Caco-2 (cell line): ENCODE measurements at regions of chr2 and their contacts with region 1.

Region 1: GRCh38 chr2:35871672-35872071 is 483.9 kb upstream of the CRIM1 start:
- DNase-seq: peak in 1 of 2 experiments; percentile 25
- H3K4me3 ChIP-seq: no peak overlapping the region
- H3K4me3 Mint-ChIP-seq: no peak overlapping the region
- H3K27ac Mint-ChIP-seq: no peak overlapping the region
- H3K4me1 ChIP-seq: no peaks in the 10 kb centered on the region
- H3K4me1 Mint-ChIP-seq: no peaks in the 10 kb centered on the region
- H3K27me3 ChIP-seq: no peaks in the 10 kb centered on the region
- H3K27me3 Mint-ChIP-seq: no peaks in the 10 kb centered on the region
- CTCF ChIP-seq: peak; percentile 64 to 66

Region 2: GRCh38 chr2:36197181-36197971 is 325.7 kb after region 1 on chr2:
- CTCF ChIA-PET with region 1: no interaction called
- POLR2A ChIA-PET with region 1: no interaction called
- intact Hi-C with region 1: loop called (anchors 10 kb)
- DNase-seq: no peak
- H3K4me3 ChIP-seq: no peak overlapping the region
- H3K4me3 Mint-ChIP-seq: no peak overlapping the region
- H3K27ac Mint-ChIP-seq: no peak overlapping the region
- H3K4me1 ChIP-seq: no peaks in the 10 kb centered on the region
- H3K4me1 Mint-ChIP-seq: no peaks in the 10 kb centered on the region
- H3K27me3 ChIP-seq: no peaks in the 10 kb centered on the region
- H3K27me3 Mint-ChIP-seq: no peaks in the 10 kb centered on the region
- CTCF ChIP-seq: no peak

Region 3: DNA sequence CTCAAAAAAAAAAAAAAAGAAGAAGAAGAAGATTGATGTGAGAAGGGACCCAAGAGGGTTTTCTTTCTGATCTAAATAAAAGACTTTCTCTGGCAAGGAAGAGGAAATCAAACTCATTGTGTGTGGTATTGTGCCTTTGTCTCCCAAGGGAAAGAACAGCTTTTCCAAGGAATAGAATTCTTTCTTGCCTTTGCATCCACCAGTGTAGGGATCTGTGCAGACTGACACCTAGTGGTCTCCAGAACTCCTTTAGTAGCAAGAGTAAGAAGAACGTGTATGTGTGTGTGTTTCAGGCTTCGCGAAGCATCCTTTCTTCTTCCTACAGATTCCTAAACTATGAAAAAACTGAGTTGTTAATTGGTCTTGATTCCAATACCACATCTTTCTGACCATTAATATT is 450.4 kb after region 1 on chr2:
- CTCF ChIA-PET with region 1: interaction called, 6 read pairs
- POLR2A ChIA-PET with region 1: no interaction called
- intact Hi-C with region 1: loop called (anchors 1 kb)
- DNase-seq: peak in 1 of 2 experiments; percentile 35
- H3K4me3 ChIP-seq: no peak overlapping the region
- H3K4me3 Mint-ChIP-seq: no peak overlapping the region
- H3K27ac Mint-ChIP-seq: no peak overlapping the region
- H3K4me1 ChIP-seq: no peaks in the 10 kb centered on the region
- H3K4me1 Mint-ChIP-seq: no peaks in the 10 kb centered on the region
- H3K27me3 ChIP-seq: no peaks in the 10 kb centered on the region
- H3K27me3 Mint-ChIP-seq: no peaks in the 10 kb centered on the region
- CTCF ChIP-seq: peak; percentile 43 to 67

Region 4: GRCh38 chr2:36672199-36672598 is 800.5 kb after region 1 on chr2:
- CTCF ChIA-PET with region 1: no interaction called
- POLR2A ChIA-PET with region 1: no interaction called
- intact Hi-C with region 1: loop called (anchors 1 kb)
- DNase-seq: peak in 1 of 2 experiments; percentile 48
- H3K4me3 ChIP-seq: no peak overlapping the region
- H3K4me3 Mint-ChIP-seq: no peak overlapping the region
- H3K27ac Mint-ChIP-seq: no peak overlapping the region
- H3K4me1 ChIP-seq: peaks cover 4% of the 10 kb centered on the region; the same call in 1 of the 2 replicates
- H3K4me1 Mint-ChIP-seq: peaks cover 30% of the 10 kb centered on the region
- H3K27me3 ChIP-seq: no peaks in the 10 kb centered on the region; the same call in 1 of the 2 replicates
- H3K27me3 Mint-ChIP-seq: no peaks in the 10 kb centered on the region
- CTCF ChIP-seq: peak; percentile 58 to 70